ENCODE measurements at regions of chr22 and their contacts with region 1.

Region 1: GRCh38 chr22:17830043-17830961 is 56.0 kb upstream of the BID start:
- DNase-seq: peak; percentile 87
- H3K4me3 Mint-ChIP-seq: no peak overlapping the region
- H3K27ac Mint-ChIP-seq: no peak overlapping the region
- H3K4me1 Mint-ChIP-seq: no peaks in the 10 kb centered on the region
- H3K27me3 Mint-ChIP-seq: no peaks in the 10 kb centered on the region
- CTCF ChIP-seq: peak; percentile 99

Region 2: GRCh38 chr22:17562906-17563870 is 267.1 kb before region 1 on chr22 and contains the start of gene SLC25A18:
- CTCF ChIA-PET with region 1: interaction called, 4 read pairs
- POLR2A ChIA-PET with region 1: no interaction called
- intact Hi-C with region 1: loop called (anchors 1 kb)
- DNase-seq: no peak
- H3K4me3 Mint-ChIP-seq: no peak within 1 kb of the TSS
- H3K27ac Mint-ChIP-seq: no peak within 1 kb of the TSS
- H3K4me1 Mint-ChIP-seq: peaks cover 11% of the 10 kb centered on the region
- H3K27me3 Mint-ChIP-seq: no peaks in the 10 kb centered on the region
- CTCF ChIP-seq: no peak
- total RNA-seq, gene SLC25A18: 0.15 and 0.35 TPM in 2 replicates

Region 3: DNA sequence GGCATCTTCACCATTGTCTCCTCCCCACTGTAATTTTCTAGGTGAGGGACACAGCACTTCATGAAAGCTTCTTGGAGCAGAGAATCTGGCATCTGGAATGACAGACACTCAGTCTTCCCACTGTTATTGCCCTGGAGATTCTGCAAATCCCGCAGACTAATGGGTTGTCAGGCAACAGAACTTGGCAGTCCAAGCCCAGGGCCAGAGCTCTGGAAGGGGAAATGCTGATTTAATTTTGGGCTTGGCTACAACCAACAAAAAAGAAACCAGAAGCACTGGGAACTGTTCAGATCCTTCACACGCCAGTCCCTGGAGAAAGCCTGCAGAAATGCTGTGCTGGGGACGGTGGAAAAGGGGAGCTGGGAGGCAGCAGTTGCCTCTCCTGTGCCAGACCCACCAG is 15.5 kb after region 1 on chr22:
- CTCF ChIA-PET with region 1: interaction called, 13 read pairs
- POLR2A ChIA-PET with region 1: no interaction called
- intact Hi-C with region 1: no loop called
- DNase-seq: no peak
- H3K4me3 Mint-ChIP-seq: no peak overlapping the region
- H3K27ac Mint-ChIP-seq: no peak overlapping the region
- H3K4me1 Mint-ChIP-seq: no peaks in the 10 kb centered on the region
- H3K27me3 Mint-ChIP-seq: no peaks in the 10 kb centered on the region
- CTCF ChIP-seq: no peak

Region 4: GRCh38 chr22:18001040-18001893 is 171.0 kb after region 1 on chr22:
- CTCF ChIA-PET with region 1: interaction called, 21 read pairs
- POLR2A ChIA-PET with region 1: no interaction called
- intact Hi-C with region 1: loop called (anchors 2 kb)
- DNase-seq: peak; percentile 98
- H3K4me3 Mint-ChIP-seq: peak overlapping the region; percentile 92
- H3K27ac Mint-ChIP-seq: peak overlapping the region; percentile 99
- H3K4me1 Mint-ChIP-seq: peaks cover 31% of the 10 kb centered on the region
- H3K27me3 Mint-ChIP-seq: no peaks in the 10 kb centered on the region
- CTCF ChIP-seq: peak; percentile 48

Region 5: GRCh38 chr22:18057568-18058209 is 227.4 kb after region 1 on chr22:
- CTCF ChIA-PET with region 1: interaction called, 11 read pairs
- POLR2A ChIA-PET with region 1: interaction called, 3 read pairs
- intact Hi-C with region 1: no loop called
- DNase-seq: peak; percentile 99
- H3K4me3 Mint-ChIP-seq: no peak overlapping the region
- H3K27ac Mint-ChIP-seq: peak overlapping the region; percentile 5
- H3K4me1 Mint-ChIP-seq: peaks cover 31% of the 10 kb centered on the region
- H3K27me3 Mint-ChIP-seq: no peaks in the 10 kb centered on the region
- CTCF ChIP-seq: no peak

Region 6: DNA sequence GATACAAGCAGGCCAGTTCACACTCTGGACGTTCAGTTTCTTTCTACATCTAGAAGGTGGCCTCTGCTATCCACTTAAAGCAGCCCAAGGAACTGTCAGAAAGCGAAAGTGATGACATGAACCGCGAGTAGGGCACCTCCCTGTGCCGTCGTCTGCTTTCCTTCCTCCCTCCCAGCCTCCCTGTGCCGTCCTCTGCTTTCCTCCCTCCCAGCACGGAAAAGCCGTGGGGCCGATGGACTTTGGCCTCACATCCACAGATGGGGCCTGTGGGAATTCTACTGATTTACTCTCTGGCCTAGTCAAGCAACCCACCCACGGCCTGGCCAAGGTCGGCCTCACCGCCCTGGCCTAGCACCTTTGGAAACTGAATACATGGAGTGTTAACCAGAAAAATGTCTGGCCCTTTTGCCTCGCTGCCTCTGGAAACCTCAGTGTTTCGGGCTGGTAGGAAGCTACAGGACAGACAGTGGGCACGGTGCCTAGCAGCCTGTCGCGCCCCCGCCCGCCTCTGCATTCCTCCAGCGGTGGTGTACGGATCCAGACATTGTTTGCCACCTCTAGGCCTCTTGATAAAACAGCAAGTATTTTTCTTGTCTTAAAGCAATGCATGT is 261.7 kb after region 1 on chr22:
- CTCF ChIA-PET with region 1: interaction called, 6 read pairs
- POLR2A ChIA-PET with region 1: no interaction called
- intact Hi-C with region 1: loop called (anchors 1 kb)
- DNase-seq: peak; percentile 76
- H3K4me3 Mint-ChIP-seq: peak overlapping the region; percentile 75
- H3K27ac Mint-ChIP-seq: peak overlapping the region; percentile 97
- H3K4me1 Mint-ChIP-seq: peaks cover 14% of the 10 kb centered on the region
- H3K27me3 Mint-ChIP-seq: no peaks in the 10 kb centered on the region
- CTCF ChIP-seq: no peak

Measured in MCF 10A (cell line).